Esophagus squamous epithelium (tissue), 5 donors: ENCODE measurements at regions of chr1 and their contacts with region 1.

Region 1: GRCh38 chr1:27981145-27981544 is 21.4 kb downstream of the XKR8 start:
- DNase-seq: no peak
- H3K4me3 ChIP-seq: no peak overlapping the region
- H3K27ac ChIP-seq: peak overlapping the region in 1 of 4 donors; percentile 30
- H3K4me1 ChIP-seq: peaks cover 0 to 8% (median 0%) of the 10 kb centered on the region in 3 donors
- H3K27me3 ChIP-seq: no peaks in the 10 kb centered on the region
- CTCF ChIP-seq: no peak
- POLR2A ChIP-seq: no peak

Region 2: DNA sequence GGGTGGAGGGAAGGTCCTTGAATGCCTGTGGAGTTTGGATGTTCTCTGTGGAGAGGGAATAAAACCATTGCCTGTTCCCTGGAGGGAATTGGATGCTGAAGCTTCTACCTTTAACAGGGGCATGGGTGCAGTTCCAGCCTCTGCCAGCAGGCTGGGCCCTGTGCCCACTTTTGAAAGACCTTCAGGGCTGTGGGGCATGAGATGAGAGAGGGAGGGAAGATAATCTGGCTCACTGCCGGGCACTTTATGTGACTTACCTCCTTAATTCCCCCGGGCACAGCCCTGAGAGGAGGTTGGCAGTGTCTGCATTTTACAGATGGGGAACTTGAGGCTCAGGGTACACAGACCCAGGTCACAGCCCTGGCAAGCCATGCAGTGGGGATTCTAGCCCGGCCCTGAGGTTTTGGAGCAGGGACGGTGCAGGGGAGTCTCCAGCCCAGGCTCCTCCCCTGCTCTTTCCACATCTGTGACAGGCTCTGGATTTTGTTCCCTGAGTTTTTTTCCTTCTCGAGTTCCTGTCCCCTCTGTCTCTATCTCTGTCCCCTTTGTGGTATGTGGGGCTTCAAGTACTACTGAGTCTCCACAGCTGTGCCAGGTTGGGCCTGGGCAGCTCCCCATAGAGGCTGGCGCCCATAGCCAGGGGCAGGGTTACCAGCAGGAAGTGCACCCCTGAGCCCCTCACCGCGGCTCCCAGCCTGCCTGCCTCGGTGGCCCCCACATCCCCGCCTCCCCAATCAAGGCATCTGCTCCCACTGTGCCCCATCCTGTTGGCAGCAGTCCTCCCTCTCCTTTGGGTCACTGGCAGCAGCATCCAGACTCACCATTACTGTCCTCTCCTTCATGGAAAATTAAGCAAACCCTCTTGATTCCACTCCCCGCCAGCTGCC is 122.8 kb before region 1 on chr1:
- intact Hi-C with region 1: loop called (anchors 5 kb)
- DNase-seq: no peak
- H3K4me3 ChIP-seq: peak overlapping the region in 1 of 4 donors; percentile 42
- H3K27ac ChIP-seq: peak overlapping the region in 3 of 4 donors; percentile 31 to 39 (median 34)
- H3K4me1 ChIP-seq: peaks cover 9 to 21% (median 11%) of the 10 kb centered on the region in 3 donors
- H3K27me3 ChIP-seq: no peaks in the 10 kb centered on the region
- CTCF ChIP-seq: peak; percentile 94 to 98 (median 98)
- POLR2A ChIP-seq: no peak